Caco-2 (cell line): ENCODE measurements at regions of chr10 and their contacts with region 1.

Region 1: GRCh38 chr10:101818119-101818871 is at the start of gene OGA:
- DNase-seq: peak; percentile 99 to 100
- H3K4me3 ChIP-seq: peak within 1 kb of the TSS; percentile 86
- H3K4me3 Mint-ChIP-seq: peak within 1 kb of the TSS; percentile 95
- H3K27ac Mint-ChIP-seq: peak within 1 kb of the TSS; percentile 97
- H3K4me1 ChIP-seq: peaks cover 6% of the 10 kb centered on the region
- H3K4me1 Mint-ChIP-seq: peaks cover 13% of the 10 kb centered on the region
- H3K27me3 ChIP-seq: no peaks in the 10 kb centered on the region
- H3K27me3 Mint-ChIP-seq: no peaks in the 10 kb centered on the region
- CTCF ChIP-seq: no peak
- total RNA-seq, gene OGA: 76.9 and 84.3 TPM in 2 replicates

Region 2: GRCh38 chr10:101835064-101835761 is 16.9 kb after region 1 on chr10:
- CTCF ChIA-PET with region 1: interaction called, 14 read pairs
- POLR2A ChIA-PET with region 1: interaction called, 12 read pairs
- intact Hi-C with region 1: loop called (anchors 1 kb)
- DNase-seq: no peak
- H3K4me3 ChIP-seq: no peak overlapping the region
- H3K4me3 Mint-ChIP-seq: no peak overlapping the region
- H3K27ac Mint-ChIP-seq: peak overlapping the region; percentile 3
- H3K4me1 ChIP-seq: peaks cover 28% of the 10 kb centered on the region
- H3K4me1 Mint-ChIP-seq: peaks cover 10% of the 10 kb centered on the region
- H3K27me3 ChIP-seq: no peaks in the 10 kb centered on the region
- H3K27me3 Mint-ChIP-seq: no peaks in the 10 kb centered on the region
- CTCF ChIP-seq: no peak

Region 3: DNA sequence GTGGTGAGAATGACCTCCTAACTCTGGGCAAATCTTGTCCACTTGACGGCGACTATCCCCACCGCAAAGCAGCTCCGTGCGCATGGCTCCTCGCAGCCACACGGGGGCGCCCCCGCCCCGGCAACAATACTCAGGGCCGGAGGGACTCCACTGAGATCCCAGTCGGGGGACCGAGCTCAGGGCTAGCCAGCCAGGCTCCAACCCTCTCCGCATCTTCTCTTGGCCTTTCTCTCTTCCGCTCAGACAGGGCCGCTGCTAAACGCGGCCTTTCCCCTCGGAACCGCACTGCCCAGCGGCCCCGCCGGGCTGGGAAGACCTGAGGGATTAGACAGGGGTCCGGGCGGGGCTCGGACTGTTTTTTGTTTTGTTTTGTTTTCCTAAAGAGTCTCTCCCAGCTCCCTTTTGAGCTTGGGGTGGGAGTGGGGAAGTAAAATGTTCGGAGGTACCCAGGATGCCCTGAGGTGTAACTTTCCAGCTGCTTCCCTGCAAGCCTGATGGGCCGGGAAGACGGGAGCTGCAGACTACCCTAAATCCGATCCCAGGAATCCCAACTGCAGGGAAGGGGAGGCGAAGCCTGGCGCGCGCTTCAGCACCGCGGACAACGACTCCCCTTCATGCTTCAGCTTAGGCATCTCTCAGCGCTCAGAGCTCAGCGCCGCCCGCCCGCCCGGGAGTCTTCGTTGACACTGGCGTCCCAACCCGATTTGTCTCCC is 22.6 kb after region 1 on chr10:
- CTCF ChIA-PET with region 1: interaction called, 14 read pairs
- POLR2A ChIA-PET with region 1: interaction called, 12 read pairs
- intact Hi-C with region 1: loop called (anchors 1 kb)
- DNase-seq: peak; percentile 59 to 77
- H3K4me3 ChIP-seq: no peak overlapping the region
- H3K4me3 Mint-ChIP-seq: peak overlapping the region; percentile 71
- H3K27ac Mint-ChIP-seq: no peak overlapping the region
- H3K4me1 ChIP-seq: peaks cover 28% of the 10 kb centered on the region
- H3K4me1 Mint-ChIP-seq: peaks cover 10% of the 10 kb centered on the region
- H3K27me3 ChIP-seq: no peaks in the 10 kb centered on the region
- H3K27me3 Mint-ChIP-seq: no peaks in the 10 kb centered on the region
- CTCF ChIP-seq: peak; percentile 74 to 82